ENCODE measurements at regions of chr2 and their contacts with region 1.

Region 1: GRCh38 chr2:96174251-96175144 is 29.3 kb upstream of the DUSP2 start:
- DNase-seq: peak; percentile 85
- H3K4me3 Mint-ChIP-seq: no peak overlapping the region
- H3K27ac Mint-ChIP-seq: no peak overlapping the region
- H3K4me1 Mint-ChIP-seq: peaks cover 3% of the 10 kb centered on the region
- H3K27me3 Mint-ChIP-seq: peaks cover 4% of the 10 kb centered on the region

Region 2: GRCh38 chr2:96131152-96131812 is 43.2 kb before region 1 on chr2:
- CTCF ChIA-PET with region 1: interaction called, 323 read pairs
- POLR2A ChIA-PET with region 1: interaction called, 4 read pairs
- DNase-seq: peak; percentile 32
- H3K4me3 Mint-ChIP-seq: no peak overlapping the region
- H3K27ac Mint-ChIP-seq: peak overlapping the region; percentile 33
- H3K4me1 Mint-ChIP-seq: peaks cover 26% of the 10 kb centered on the region
- H3K27me3 Mint-ChIP-seq: no peaks in the 10 kb centered on the region

Region 3: DNA sequence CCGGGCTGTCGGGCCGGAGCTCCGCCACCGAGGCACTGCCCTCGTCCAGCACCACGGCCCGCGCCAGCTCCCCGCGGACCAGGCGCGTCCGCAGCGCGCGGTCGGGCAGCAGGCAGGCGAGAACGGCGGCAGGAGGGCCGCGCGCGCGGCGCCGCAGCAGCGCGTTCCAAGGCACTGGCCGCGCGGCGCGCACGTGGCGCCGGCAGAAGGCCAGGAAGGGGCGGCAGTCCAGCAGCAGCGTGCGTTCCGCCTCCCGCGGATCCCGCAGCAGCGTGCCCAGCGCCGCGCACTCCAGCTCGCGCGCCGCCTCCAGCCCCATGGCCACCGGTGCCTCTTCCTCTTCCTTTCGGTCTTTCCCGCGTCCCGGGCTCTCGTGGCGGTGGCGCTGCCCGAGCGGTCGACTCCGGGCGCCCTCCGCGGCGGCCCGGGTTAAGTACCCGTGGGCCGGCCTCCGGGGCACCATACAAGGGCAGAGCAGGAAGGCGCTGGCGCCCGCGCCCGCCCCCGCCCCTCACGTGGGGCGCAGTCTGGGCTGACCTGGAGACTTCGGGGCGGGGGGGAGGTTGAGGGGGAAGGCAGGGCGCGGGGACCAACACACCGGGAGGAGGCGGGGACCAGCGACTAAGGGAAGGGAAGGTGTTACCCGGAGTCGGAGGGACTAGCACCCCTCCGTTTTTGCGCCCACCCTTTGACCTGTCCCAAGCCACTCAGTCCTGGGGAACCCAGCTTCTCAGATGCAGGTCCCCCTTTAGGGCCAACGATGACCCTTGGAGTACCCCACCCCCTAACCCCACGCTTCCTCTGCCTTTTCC is 29.3 kb before region 1 on chr2 and contains the start of gene DUSP2:
- CTCF ChIA-PET with region 1: interaction called, 323 read pairs
- POLR2A ChIA-PET with region 1: interaction called, 27 read pairs
- DNase-seq: peak; percentile 90
- H3K4me3 Mint-ChIP-seq: peak within 1 kb of the TSS; percentile 88
- H3K27ac Mint-ChIP-seq: peak within 1 kb of the TSS; percentile 95
- H3K4me1 Mint-ChIP-seq: peaks cover 67% of the 10 kb centered on the region
- H3K27me3 Mint-ChIP-seq: no peaks in the 10 kb centered on the region
- total RNA-seq, gene DUSP2: 40.8 to 42.5 TPM

Region 4: DNA sequence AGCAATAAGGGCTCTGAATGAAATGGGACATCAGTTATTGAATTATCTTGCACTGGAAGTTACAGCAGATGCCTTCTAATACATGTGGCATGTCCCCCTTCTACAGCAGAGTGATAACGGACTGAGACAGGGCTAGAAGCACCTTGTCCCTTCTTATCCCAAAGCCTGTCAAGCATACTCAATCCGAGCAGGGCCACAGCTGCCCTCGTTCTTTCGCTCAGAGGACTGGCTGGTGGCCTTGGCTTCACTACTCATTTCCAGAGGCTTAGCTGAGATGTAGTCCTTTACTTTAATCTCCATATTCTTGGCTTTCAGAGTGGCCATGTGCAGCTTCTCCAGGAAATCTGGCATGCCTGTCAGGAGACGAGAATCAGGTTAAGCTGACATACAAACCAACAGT is 12.1 kb after region 1 on chr2:
- CTCF ChIA-PET with region 1: interaction called, 19 read pairs
- POLR2A ChIA-PET with region 1: interaction called, 3 read pairs
- DNase-seq: no peak
- H3K4me3 Mint-ChIP-seq: no peak overlapping the region
- H3K27ac Mint-ChIP-seq: no peak overlapping the region
- H3K4me1 Mint-ChIP-seq: peaks cover 2% of the 10 kb centered on the region
- H3K27me3 Mint-ChIP-seq: no peaks in the 10 kb centered on the region

Region 5: GRCh38 chr2:96305091-96305978 is 130.8 kb after region 1 on chr2 and contains the start of gene SNRNP200:
- CTCF ChIA-PET with region 1: no interaction called
- POLR2A ChIA-PET with region 1: no interaction called
- DNase-seq: peak; percentile 93
- H3K4me3 Mint-ChIP-seq: peak within 1 kb of the TSS; percentile 100
- H3K27ac Mint-ChIP-seq: peak within 1 kb of the TSS; percentile 98
- H3K4me1 Mint-ChIP-seq: peaks cover 71% of the 10 kb centered on the region
- H3K27me3 Mint-ChIP-seq: no peaks in the 10 kb centered on the region
- total RNA-seq, gene SNRNP200: 149 to 156 TPM

Measured in activated CD4-positive, alpha-beta memory T cell treated with anti-CD3 and anti-CD28 coated beads, Interleukin-2, amount 10 ng/mL, durations not matched to agents 7 days and 5 days (primary cell).